ENCODE measurements at regions of chr3 and their contacts with region 1.

Region 1: DNA sequence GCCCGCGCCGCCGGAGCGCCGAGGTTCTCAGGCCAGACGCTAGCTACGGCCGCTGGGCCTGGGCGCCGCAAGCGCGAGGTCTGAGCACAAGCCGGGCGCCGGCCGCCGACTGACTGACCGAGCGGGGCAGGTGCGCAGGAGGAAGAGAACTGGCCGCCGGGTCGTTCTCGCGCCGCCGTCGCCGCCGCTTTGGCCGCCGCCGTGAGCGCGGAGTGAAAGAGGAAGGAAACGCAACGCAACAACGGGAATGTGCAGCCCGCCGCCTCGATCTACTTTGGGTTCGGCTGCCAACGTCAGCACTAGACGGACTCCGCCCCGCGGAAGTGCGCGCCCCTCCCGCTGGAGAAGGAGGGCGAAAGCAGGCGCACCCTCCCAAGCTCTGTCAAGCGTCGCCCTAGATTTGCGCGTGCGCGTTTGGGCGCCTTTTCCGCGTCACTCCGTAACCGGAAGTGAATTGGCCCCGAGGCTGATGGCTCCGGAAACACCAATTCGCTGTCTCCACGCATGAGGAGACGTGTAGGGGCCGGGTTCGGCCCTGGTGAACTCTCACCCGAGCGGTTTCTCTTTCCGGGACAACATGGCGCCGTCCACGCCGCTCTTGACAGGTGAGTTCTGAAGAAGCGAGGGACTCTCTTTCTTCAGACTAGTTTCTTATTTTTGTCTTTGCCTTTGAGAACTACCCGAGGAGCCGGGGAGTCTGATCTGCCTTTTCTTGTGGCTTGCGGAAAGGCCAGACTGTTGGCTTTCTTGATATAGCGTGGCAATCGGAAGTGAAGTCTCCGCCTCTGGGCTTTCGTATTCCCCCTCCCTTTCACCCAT is at the starts of genes EIF2A and SERP1:
- DNase-seq: peak; percentile 99
- H3K4me3 Mint-ChIP-seq: peak within 1 kb of the TSS; percentile 95
- H3K27ac Mint-ChIP-seq: peak within 1 kb of the TSS; percentile 98
- H3K4me1 Mint-ChIP-seq: peaks cover 70% of the 10 kb centered on the region
- H3K27me3 Mint-ChIP-seq: no peaks in the 10 kb centered on the region
- total RNA-seq, gene EIF2A: 122 TPM in 2 replicates
- total RNA-seq, gene SERP1: 96.0 and 102 TPM in 2 replicates

Region 2: DNA sequence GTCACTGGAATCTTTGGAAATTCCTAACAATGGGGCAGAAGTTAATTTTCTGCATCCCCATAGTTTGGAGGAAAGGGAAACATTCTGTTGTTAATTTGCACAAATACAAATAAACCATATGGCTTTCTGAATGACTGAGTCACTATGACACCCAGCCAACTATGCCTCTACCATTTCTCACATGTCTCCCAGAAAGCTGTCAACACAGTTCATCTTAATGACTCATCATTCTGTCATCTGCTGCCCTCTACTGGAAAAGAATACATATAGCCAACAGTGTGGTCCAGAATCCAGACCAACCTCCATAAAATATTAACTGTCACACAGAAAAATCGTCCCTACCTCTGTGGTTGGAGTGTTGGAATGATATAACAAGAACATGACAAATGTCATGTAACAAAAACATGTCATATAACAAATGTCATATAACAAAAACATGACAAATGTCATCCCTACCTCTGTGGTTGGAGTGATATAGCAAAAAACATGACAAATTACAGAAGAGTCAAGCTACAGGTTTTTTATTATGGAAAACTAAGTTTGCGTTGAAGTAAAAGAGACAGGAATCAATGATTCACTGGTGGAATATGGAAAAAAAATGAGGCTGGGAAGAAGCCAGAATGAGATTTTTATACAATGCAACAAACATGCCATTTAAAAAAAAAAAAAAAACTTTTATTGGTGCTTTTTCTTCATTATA is 1602.8 kb before region 1 on chr3:
- intact Hi-C with region 1: loop called (anchors 10 kb)
- DNase-seq: peak; percentile 16
- H3K4me3 Mint-ChIP-seq: no peak overlapping the region
- H3K27ac Mint-ChIP-seq: no peak overlapping the region
- H3K4me1 Mint-ChIP-seq: no peaks in the 10 kb centered on the region
- H3K27me3 Mint-ChIP-seq: peaks cover 11% of the 10 kb centered on the region

Region 3: GRCh38 chr3:149377408-149378377 is 1168.7 kb before region 1 on chr3 and contains the start of gene TM4SF1:
- intact Hi-C with region 1: no loop called
- DNase-seq: no peak
- H3K4me3 Mint-ChIP-seq: peak within 1 kb of the TSS; percentile 35
- H3K27ac Mint-ChIP-seq: no peak within 1 kb of the TSS
- H3K4me1 Mint-ChIP-seq: peaks cover 6% of the 10 kb centered on the region
- H3K27me3 Mint-ChIP-seq: peaks cover 4% of the 10 kb centered on the region
- total RNA-seq, gene TM4SF1: 0.13 and 0.22 TPM in 2 replicates

Region 4: DNA sequence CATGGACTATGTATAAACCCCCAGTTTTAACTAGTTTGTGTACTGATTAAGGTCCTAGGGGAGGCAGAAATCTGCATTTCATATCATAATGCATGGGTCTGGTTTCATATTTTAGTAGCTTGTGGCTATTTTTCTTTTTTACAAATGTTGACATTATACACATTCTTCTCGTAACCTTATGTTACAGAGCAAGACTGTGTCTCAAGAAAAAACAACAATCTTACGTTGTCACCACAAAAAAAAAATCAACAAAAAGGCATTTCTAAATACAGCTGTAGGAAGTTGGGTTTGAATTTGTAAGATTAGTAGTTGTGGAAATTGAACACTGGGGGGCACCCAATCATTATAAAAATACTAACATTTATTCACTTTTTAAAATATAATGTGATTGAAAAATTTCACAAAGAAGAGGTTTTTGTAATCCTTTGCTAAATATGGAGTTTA is 18.1 kb before region 1 on chr3:
- intact Hi-C with region 1: loop called (anchors 1 kb)
- DNase-seq: no peak
- H3K4me3 Mint-ChIP-seq: no peak overlapping the region
- H3K27ac Mint-ChIP-seq: no peak overlapping the region
- H3K4me1 Mint-ChIP-seq: peaks cover 7% of the 10 kb centered on the region
- H3K27me3 Mint-ChIP-seq: peaks cover 17% of the 10 kb centered on the region

Region 5: GRCh38 chr3:150613709-150614480 is 67.5 kb after region 1 on chr3:
- intact Hi-C with region 1: loop called (anchors 2 kb)
- DNase-seq: no peak
- H3K4me3 Mint-ChIP-seq: no peak overlapping the region
- H3K27ac Mint-ChIP-seq: peak overlapping the region; percentile 35
- H3K4me1 Mint-ChIP-seq: peaks cover 56% of the 10 kb centered on the region
- H3K27me3 Mint-ChIP-seq: no peaks in the 10 kb centered on the region

Region 6: GRCh38 chr3:150787741-150788370 is 241.4 kb after region 1 on chr3:
- intact Hi-C with region 1: loop called (anchors 1 kb)
- DNase-seq: peak; percentile 61
- H3K4me3 Mint-ChIP-seq: peak overlapping the region; percentile 43
- H3K27ac Mint-ChIP-seq: no peak overlapping the region
- H3K4me1 Mint-ChIP-seq: peaks cover 52% of the 10 kb centered on the region
- H3K27me3 Mint-ChIP-seq: peaks cover 6% of the 10 kb centered on the region

Region 7: DNA sequence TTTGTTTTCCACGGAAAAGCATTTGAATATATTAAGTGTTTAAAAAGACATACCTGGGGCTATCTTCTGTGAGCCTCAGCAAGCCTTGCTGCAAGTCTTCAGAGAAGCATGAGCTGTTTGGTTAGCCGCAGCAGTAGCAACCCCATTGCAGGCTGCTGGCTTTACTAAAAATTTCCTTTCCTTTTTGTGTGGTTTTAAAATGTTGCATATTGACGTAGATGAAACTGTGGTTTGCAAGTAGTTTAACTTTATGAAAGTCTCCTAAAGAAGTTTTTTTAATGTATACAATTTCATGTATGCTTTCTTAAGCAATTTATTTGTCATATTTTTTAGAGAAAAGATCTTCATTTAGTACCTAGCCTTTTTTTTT is 656.6 kb after region 1 on chr3 and contains the start of gene GPR171:
- intact Hi-C with region 1: loop called (anchors 5 kb)
- DNase-seq: peak; percentile 72
- H3K4me3 Mint-ChIP-seq: peak within 1 kb of the TSS; percentile 96
- H3K27ac Mint-ChIP-seq: peak within 1 kb of the TSS; percentile 99
- H3K4me1 Mint-ChIP-seq: peaks cover 73% of the 10 kb centered on the region
- H3K27me3 Mint-ChIP-seq: no peaks in the 10 kb centered on the region
- total RNA-seq, gene GPR171: 172 and 191 TPM in 2 replicates